ENCODE measurements at regions of chr1 and their contacts with region 1.

Region 1: DNA sequence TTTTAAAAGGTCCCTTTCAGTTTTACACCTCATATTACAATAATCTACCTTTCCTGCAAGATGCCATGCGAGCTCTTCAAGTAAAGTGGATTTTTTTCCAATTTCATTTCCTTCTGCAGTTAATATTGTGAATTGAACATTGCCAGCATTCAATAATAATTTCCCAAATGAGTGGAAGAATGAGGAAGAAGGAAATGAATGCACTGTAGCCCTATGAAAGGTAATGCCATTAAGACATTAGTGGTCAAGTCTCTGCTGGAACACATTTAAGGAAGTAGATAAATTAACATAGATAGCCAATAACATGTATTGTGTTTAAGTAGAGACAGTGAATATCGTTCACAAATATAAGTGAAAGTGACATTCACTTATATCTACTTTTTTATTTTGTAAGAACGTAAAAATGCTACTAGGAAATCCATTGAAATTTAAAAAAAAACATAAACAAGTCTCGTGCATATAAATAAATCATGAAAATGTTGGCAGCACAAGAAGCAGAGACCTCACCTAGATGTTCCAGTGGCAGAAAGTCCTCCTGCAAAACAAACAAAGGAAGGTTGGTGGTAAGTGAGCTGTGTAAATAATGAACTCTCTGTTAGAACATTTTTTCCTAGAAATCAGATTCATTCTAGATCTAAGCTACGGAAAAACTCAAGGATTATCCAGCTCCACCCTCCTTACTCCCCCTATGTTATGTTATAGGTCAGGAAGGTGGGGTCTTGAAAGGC is 17.7 kb downstream of the FCRL3 start:
- DNase-seq: no peak
- ATAC-seq: no peak

Region 2: GRCh38 chr1:159370855-159371254 is 1688.0 kb after region 1 on chr1:
- intact Hi-C with region 1: loop called in 1 of 2 experiments (anchors 10 kb)
- DNase-seq: no peak
- ATAC-seq: no peak

Measured in left cardiac atrium (tissue), 4 donors.